Stomach (tissue), 19 donors: ENCODE measurements at regions of chr15 and their contacts with region 1.

Region 1: GRCh38 chr15:51971375-51972133 is at the start of gene LEO1:
- DNase-seq: peak; percentile 91 to 98
- H3K4me3 ChIP-seq: peak within 1 kb of the TSS; percentile 64 to 96 (median 87)
- H3K27ac ChIP-seq: peak within 1 kb of the TSS; percentile 82 to 94 (median 88)
- H3K4me1 ChIP-seq: peaks cover 14 to 20% (median 17%) of the 10 kb centered on the region in 4 donors
- H3K27me3 ChIP-seq: no peaks in the 10 kb centered on the region
- CTCF ChIP-seq: peak in 3 of 7 experiments; percentile 5 to 54 (median 39)
- EP300 ChIP-seq: no peak
- POLR2A ChIP-seq: peak in 1 of 4 donors; percentile 37
- total RNA-seq, gene LEO1: 0.58 to 16.3 (median 10.6) TPM

Region 2: GRCh38 chr15:51878446-51879386 is 92.8 kb before region 1 on chr15:
- intact Hi-C with region 1: no loop called
- DNase-seq: peak in 1 of 2 donors; percentile 85
- H3K4me3 ChIP-seq: no peak overlapping the region
- H3K27ac ChIP-seq: peak overlapping the region in 4 of 5 donors; percentile 49 to 74 (median 56)
- H3K4me1 ChIP-seq: peaks cover 23 to 69% (median 31%) of the 10 kb centered on the region in 4 donors
- H3K27me3 ChIP-seq: no peaks in the 10 kb centered on the region
- CTCF ChIP-seq: no peak
- EP300 ChIP-seq: no peak
- POLR2A ChIP-seq: no peak

Region 3: GRCh38 chr15:52071546-52071945 is 100.0 kb after region 1 on chr15:
- intact Hi-C with region 1: no loop called
- DNase-seq: peak; percentile 71 to 72
- H3K4me3 ChIP-seq: no peak overlapping the region
- H3K27ac ChIP-seq: peak overlapping the region in 4 of 5 donors; percentile 29 to 67 (median 46)
- H3K4me1 ChIP-seq: peaks cover 0 to 30% (median 17%) of the 10 kb centered on the region in 4 donors
- H3K27me3 ChIP-seq: no peaks in the 10 kb centered on the region
- CTCF ChIP-seq: no peak
- EP300 ChIP-seq: no peak
- POLR2A ChIP-seq: no peak

Region 4: DNA sequence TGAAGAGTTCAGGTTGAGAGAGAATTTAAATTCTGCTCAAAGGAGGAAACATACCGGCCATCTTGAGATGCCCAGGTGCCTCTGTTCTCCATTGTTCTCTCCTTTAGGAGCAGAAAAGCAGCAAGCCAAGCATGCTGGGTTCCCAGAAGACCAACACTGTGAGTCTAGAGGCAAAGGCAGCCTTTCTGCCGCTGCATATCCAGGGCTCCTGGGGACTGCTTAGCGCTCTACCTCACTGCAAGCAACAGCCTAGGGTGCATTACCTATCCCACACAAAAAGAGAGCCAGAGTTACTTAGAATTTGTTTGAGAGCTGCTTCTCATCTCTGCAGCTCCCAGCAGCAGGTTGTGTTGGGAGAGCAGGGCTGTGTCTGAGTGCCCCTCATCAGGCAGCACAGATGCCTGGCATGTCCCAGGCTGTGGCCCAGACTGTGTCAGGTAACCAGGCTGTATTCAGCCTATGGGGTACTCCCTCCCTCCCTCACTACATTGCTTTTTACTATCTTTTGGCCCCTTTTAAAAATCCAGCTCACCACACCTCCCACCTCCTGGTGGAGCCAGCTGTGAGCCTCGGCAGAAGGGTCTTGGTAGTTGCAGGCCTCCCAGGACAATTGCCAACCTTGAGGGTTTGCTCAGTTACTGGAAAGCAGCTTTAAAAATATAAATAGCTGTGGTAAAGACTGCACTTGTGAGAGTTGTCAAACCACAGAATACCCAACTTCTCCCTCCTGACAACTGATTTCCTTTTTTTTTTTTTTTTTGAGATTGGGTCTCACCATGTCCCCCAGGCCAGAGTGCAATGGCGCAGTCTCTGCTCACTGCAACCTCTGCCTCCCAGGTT is 110.9 kb after region 1 on chr15:
- intact Hi-C with region 1: loop called (anchors 10 kb)
- DNase-seq: no peak
- H3K4me3 ChIP-seq: no peak overlapping the region
- H3K27ac ChIP-seq: no peak overlapping the region
- H3K4me1 ChIP-seq: peaks cover 0 to 8% (median 4%) of the 10 kb centered on the region in 4 donors
- H3K27me3 ChIP-seq: no peaks in the 10 kb centered on the region
- CTCF ChIP-seq: no peak
- EP300 ChIP-seq: no peak
- POLR2A ChIP-seq: no peak